Heart right ventricle (tissue), 16 donors: ENCODE measurements at regions of chr20 and their contacts with region 1.

Region 1: DNA sequence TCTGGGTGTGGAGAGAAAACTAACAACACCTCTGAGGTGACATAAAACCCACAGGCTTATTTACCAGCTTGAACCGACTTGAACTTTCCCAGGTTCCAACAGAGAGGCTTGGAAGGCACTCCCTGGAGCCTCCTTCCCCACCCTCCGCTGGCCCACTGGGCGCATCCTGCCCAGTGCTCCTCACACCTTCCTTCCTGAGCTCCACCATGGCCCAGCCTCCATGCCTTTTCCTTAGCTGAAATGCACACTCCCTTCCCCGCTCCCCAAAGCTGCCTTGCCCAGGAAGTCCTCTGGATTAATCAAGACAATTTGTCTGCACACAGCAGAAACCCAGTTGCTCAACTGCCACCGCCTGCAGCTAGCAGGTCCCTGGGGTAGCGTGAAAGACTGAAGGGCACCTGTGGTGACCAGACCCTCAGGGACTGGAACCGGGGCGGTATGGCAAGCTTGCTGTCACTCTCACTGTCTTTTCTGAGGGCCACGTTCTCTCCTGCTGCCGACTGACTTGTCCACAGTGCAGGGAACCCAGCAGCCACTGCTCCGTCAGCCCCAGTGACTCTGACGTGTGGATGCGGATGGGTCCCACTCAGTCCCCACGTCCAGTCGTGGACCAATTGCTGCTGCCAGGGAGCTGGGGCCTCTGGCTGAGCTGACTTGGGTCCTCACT is 72.7 kb upstream of the PMEPA1 start:
- DNase-seq: no peak
- ATAC-seq: peak in 1 of 8 donors; percentile 34
- H3K4me3 ChIP-seq: no peak overlapping the region
- H3K27ac ChIP-seq: no peak overlapping the region
- H3K4me1 ChIP-seq: peaks cover 0 to 6% (median 0%) of the 10 kb centered on the region in 9 donors
- H3K27me3 ChIP-seq: peaks cover 0 to 8% (median 0%) of the 10 kb centered on the region in 7 donors
- CTCF ChIP-seq: no peak

Region 2: GRCh38 chr20:57526087-57526884 is 256.2 kb before region 1 on chr20:
- intact Hi-C with region 1: loop called in 1 of 10 experiments (anchors 5 kb)
- DNase-seq: no peak
- ATAC-seq: no peak
- H3K4me3 ChIP-seq: no peak overlapping the region
- H3K27ac ChIP-seq: no peak overlapping the region
- H3K4me1 ChIP-seq: no peaks in the 10 kb centered on the region
- H3K27me3 ChIP-seq: peaks cover 0 to 4% (median 0%) of the 10 kb centered on the region in 7 donors
- CTCF ChIP-seq: peak in 1 of 9 donors; percentile 8

Region 3: GRCh38 chr20:57818418-57819181 is 36.1 kb after region 1 on chr20:
- intact Hi-C with region 1: no loop called
- DNase-seq: no peak
- ATAC-seq: peak in 3 of 8 donors; percentile 19 to 67 (median 34)
- H3K4me3 ChIP-seq: no peak overlapping the region
- H3K27ac ChIP-seq: no peak overlapping the region
- H3K4me1 ChIP-seq: peaks cover 0 to 7% (median 0%) of the 10 kb centered on the region in 9 donors
- H3K27me3 ChIP-seq: peaks cover 0 to 11% (median 6%) of the 10 kb centered on the region in 7 donors
- CTCF ChIP-seq: no peak